ENCODE measurements at regions of chr17 and their contacts with region 1.

Region 1: GRCh38 chr17:66177048-66177447 is 14.9 kb downstream of the CEP112 start:
- H3K4me3 Mint-ChIP-seq: no peak overlapping the region
- H3K27ac Mint-ChIP-seq: no peak overlapping the region
- H3K4me1 Mint-ChIP-seq: no peaks in the 10 kb centered on the region
- H3K27me3 Mint-ChIP-seq: no peaks in the 10 kb centered on the region

Region 2: GRCh38 chr17:66240630-66241029 is 63.6 kb after region 1 on chr17:
- intact Hi-C with region 1: loop called (anchors 10 kb)
- H3K4me3 Mint-ChIP-seq: no peak overlapping the region
- H3K27ac Mint-ChIP-seq: no peak overlapping the region
- H3K4me1 Mint-ChIP-seq: no peaks in the 10 kb centered on the region
- H3K27me3 Mint-ChIP-seq: peaks cover 35% of the 10 kb centered on the region